ENCODE measurements at regions of chr5 and their contacts with region 1.

Region 1: DNA sequence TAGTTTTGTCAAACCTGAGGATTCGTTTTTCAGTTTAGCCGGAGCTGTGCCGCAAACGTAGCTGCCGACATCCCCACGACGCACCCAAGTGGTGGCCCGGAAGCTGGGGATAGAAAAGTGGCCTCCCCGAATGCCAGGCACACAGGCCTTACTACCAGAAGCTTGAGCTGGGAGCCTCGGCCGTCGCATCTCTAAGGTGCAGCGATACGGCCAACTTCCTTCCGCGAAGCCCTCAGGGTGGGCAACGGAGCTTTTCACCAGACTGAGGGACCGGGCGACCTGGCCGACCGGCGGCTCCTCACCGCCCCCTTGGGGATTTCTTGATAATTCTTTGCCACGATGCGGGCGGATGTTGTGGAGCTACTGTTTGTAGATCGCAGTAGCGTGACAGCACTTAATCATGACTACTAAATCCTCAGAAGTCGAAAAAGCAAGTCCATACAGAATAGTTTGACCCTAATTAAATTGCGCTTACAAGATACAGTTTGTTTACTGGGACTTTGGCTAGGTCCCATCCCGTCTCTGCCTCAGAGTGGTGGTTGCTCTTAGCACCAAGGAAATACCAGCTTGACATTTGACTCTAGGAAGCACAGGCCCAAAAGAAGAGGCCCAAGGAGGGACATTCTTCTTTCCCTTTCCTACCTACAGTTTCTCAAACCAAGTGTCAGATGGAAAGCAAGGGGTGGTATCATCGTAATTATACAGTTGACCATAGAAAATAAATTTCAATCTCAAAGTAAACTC is 613 bp upstream of the TMEM267 start:
- DNase-seq: peak; percentile 83 to 91
- ATAC-seq: peak; percentile 84 to 90 (median 86)
- H3K4me3 ChIP-seq: peak overlapping the region; percentile 90
- H3K27ac ChIP-seq: peak overlapping the region; percentile 98
- H3K4me1 ChIP-seq: peaks cover 14% of the 10 kb centered on the region
- H3K27me3 ChIP-seq: no peaks in the 10 kb centered on the region
- CTCF ChIP-seq: peak; percentile 69

Region 2: GRCh38 chr5:43129161-43129560 is 355.1 kb before region 1 on chr5:
- intact Hi-C with region 1: loop called in 1 of 2 experiments (anchors 5 kb)
- DNase-seq: no peak
- ATAC-seq: no peak
- H3K4me3 ChIP-seq: no peak overlapping the region
- H3K27ac ChIP-seq: no peak overlapping the region
- H3K4me1 ChIP-seq: peaks cover 20% of the 10 kb centered on the region
- H3K27me3 ChIP-seq: no peaks in the 10 kb centered on the region
- CTCF ChIP-seq: no peak

Region 3: DNA sequence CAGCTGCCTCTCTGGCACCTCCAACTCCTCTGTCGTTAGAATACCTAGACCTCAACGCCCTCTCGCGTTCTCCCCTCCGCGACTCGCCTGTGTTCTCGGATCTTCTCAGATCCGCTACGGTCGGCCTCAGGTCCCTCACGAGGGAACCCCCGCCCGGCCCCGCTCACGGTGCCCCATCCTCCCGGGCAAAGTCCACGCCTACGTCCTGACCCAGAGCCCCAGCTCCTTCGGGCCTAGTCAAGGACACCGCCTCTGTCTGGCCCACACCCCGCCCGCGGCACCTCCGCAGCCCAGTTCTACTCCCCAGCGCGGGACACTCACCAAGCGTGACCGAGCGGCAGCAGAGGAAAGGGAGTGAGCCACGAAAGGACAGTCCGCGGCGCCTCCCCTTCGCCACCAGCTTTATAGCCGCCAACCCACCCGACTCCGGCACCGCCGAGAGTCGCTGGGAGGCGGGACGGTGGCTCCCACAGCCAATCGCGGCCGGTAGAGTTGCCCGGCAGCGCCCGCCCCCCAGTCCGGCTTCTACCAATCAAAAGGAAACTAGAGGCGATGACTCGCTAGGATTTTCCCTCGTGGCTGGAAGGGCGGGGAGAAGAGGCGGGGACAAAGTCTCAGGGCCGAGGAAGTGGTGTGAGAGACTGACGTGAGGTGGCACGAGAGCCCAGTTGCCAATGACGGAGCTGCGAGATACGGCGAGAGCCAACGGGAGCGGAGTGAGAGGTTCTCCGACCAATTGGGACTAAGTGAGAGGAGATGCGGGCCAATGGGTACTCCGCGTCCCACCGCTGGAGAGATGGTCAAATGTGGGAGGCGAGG is 171.0 kb before region 1 on chr5 and contains the start of gene HMGCS1:
- intact Hi-C with region 1: loop called in 1 of 2 experiments (anchors 10 kb)
- DNase-seq: peak; percentile 98 to 99
- ATAC-seq: peak; percentile 98 to 99 (median 98)
- H3K4me3 ChIP-seq: peak within 1 kb of the TSS; percentile 96
- H3K27ac ChIP-seq: peak within 1 kb of the TSS; percentile 91
- H3K4me1 ChIP-seq: peaks cover 11% of the 10 kb centered on the region
- H3K27me3 ChIP-seq: no peaks in the 10 kb centered on the region
- CTCF ChIP-seq: no peak
- total RNA-seq, gene HMGCS1: 14.7 to 22.6 (median 17.9) TPM

Region 4: GRCh38 chr5:43514816-43515677 is 30.8 kb after region 1 on chr5 and contains the start of gene C5orf34:
- intact Hi-C with region 1: loop called in 1 of 2 experiments (anchors 2 kb)
- DNase-seq: peak; percentile 94 to 97
- ATAC-seq: peak; percentile 100
- H3K4me3 ChIP-seq: peak within 1 kb of the TSS; percentile 68
- H3K27ac ChIP-seq: peak within 1 kb of the TSS; percentile 78
- H3K4me1 ChIP-seq: peaks cover 10% of the 10 kb centered on the region
- H3K27me3 ChIP-seq: no peaks in the 10 kb centered on the region
- CTCF ChIP-seq: no peak
- total RNA-seq, gene C5orf34: 0.53 to 1.2 (median 0.64) TPM

Region 5: GRCh38 chr5:43543434-43543833 is 59.2 kb after region 1 on chr5:
- intact Hi-C with region 1: no loop called
- DNase-seq: no peak
- ATAC-seq: no peak
- H3K4me3 ChIP-seq: no peak overlapping the region
- H3K27ac ChIP-seq: no peak overlapping the region
- H3K4me1 ChIP-seq: peaks cover 2% of the 10 kb centered on the region
- H3K27me3 ChIP-seq: no peaks in the 10 kb centered on the region
- CTCF ChIP-seq: no peak

Measured in psoas muscle (tissue), 8 donors.